Heart left ventricle (tissue), 16 donors: ENCODE measurements at regions of chr1 and their contacts with region 1.

Region 1: DNA sequence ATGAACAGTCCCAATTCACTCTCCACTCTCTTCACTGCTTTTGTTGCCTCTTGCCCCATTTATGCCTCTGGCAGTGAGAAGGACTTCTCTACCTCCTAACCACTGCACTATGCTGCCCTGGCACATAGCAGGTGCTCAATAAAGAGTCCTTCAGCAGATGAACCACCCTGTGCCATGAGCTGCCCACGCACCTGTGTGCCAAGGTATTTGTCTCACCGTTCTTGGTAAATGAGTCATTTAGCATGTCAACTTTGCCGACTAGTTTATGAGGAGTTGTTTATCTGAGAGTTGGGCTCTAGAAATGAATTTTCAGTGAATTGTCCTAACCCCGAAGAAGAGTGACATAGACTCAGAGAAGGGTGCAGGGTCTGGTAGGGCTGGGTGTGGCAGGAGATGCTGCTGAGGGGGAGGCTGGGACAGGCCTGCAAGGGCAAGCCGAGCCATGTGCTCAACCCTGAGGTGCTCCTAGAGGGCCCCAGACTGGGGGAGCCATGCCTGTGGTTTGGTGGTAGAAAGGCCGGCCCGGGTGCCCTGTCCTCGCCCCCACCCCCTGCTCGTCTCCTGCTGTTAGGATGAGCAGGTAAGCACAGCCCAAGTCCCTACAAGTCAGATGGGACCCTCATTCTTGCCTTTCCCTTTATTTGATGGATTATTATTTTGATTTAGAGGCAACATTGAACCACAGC is 654.5 kb downstream of the MATN1 start:
- DNase-seq: no peak
- ATAC-seq: no peak
- H3K4me3 ChIP-seq: no peak overlapping the region
- H3K27ac ChIP-seq: no peak overlapping the region
- H3K4me1 ChIP-seq: no peaks in the 10 kb centered on the region
- H3K27me3 ChIP-seq: peaks cover 0 to 4% (median 0%) of the 10 kb centered on the region in 9 donors
- CTCF ChIP-seq: no peak
- POLR2A ChIP-seq: no peak

Region 2: DNA sequence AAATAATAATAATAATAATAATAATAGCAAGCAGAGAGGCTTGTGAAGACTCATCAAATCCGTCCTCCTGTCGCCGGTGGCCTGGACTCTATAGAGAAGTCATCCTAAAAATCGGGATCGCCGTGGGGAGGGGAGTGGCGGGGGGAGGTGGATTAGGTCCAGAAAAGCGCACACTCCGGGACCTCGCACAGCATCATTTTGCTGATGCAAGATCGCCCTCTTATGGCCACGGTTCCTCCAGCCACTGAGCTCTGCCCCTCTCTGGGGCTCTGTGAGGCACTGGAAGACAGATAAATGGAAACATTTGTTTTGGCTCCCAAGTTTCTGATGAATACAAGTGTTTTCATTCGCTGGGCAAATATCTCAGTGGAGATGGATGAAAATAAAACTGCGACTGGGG is 42.5 kb after region 1 on chr1:
- intact Hi-C with region 1: loop called in 1 of 10 experiments (anchors 1 kb)
- DNase-seq: peak in 3 of 5 donors; percentile 35 to 43 (median 39)
- ATAC-seq: peak in 3 of 4 donors; percentile 75 to 78 (median 76)
- H3K4me3 ChIP-seq: no peak overlapping the region
- H3K27ac ChIP-seq: no peak overlapping the region
- H3K4me1 ChIP-seq: no peaks in the 10 kb centered on the region
- H3K27me3 ChIP-seq: peaks cover 0 to 67% (median 16%) of the 10 kb centered on the region in 9 donors
- CTCF ChIP-seq: peak; percentile 39 to 70 (median 58)
- POLR2A ChIP-seq: no peak